CD4-positive, alpha-beta memory T cell (primary cell): ENCODE measurements at regions of chr22 and their contacts with region 1.

Region 1: DNA sequence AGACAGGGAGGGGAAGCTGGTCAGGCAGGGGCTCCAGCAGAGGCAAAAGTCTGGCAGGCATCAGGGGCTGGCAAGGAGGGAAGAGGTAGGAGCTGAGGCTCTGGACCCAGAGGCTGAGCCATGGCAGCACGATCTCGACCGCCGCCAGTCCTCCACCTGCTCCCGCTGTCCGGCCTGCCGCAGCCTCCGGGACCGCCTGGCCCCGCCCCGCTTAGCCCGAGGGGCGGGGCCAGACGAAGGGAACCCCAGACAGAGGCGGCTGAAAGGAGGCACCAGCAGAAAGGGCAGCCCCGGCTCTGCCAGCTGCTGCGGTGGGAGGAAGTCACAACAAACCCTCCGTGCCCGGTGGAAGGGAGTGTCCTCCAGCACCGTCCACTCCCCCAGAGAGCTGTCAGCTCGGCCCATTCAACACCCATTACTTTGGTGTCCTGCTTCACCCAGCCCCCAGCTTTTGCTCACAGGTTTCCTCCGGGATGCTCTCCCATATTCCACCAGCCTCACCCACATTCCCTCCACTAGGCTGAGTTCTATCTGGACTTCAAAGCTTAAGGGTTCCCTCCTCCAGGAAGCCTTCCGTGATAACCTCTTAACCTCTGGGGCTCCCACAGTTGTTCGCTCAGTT is at the start of gene MFNG:
- DNase-seq: peak; percentile 61 to 84 (median 64)
- H3K4me3 ChIP-seq: peak within 1 kb of the TSS; percentile 85 to 87
- H3K4me3 Mint-ChIP-seq: peak within 1 kb of the TSS; percentile 89 to 98 (median 96)
- H3K27ac ChIP-seq: peak within 1 kb of the TSS; percentile 85
- H3K27ac Mint-ChIP-seq: peak within 1 kb of the TSS; percentile 94 to 98 (median 97)
- H3K4me1 ChIP-seq: peaks cover 63% of the 10 kb centered on the region
- H3K4me1 Mint-ChIP-seq: peaks cover 39 to 87% (median 57%) of the 10 kb centered on the region in 4 donors
- H3K27me3 ChIP-seq: no peaks in the 10 kb centered on the region
- H3K27me3 Mint-ChIP-seq: no peaks in the 10 kb centered on the region
- total RNA-seq, gene MFNG: 213 to 218 TPM

Region 2: DNA sequence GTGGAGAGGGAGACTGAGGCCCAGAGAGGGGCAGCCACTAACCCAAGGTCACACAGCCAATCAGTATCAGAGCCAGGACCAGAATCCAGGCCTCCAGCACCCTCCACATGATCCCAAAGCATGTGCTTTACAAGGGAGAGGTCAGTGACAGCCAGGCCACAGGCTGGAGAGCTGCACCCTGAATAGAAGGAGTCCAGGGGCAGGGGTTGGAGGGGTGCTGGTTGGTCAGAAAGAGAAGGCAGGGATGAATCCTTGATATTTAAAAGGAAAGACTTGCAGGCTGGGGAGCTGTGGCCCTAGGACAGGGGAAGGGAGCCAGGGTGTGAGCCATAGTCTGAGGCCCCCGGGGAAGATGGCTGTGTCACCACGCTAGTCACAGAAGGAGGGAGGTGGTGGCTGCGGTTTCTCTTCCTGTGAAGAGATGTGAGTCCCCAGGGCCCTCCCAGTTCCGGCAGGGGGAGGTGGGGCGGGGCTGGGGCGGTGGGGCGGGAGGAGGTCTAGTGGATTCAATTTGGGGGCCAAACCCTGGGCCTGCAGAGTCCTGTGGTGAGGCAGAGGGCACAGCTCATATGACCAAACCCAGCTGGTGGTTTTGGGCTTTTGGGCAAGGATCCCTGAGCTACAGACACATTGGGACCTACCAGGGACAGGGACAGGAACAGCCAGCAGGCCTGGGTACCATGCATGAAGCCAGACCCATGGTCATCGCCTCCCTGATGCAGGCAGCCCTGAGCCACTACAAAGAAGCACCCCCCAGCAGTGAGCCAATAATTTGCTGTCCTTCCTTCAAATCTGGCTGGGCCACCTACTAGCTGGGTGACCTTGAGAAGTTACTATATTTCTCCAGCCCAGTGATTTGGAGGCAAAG is 256.3 kb before region 1 on chr22:
- CTCF ChIA-PET with region 1: no interaction called
- POLR2A ChIA-PET with region 1: interaction called, 14 read pairs
- intact Hi-C with region 1: no loop called
- DNase-seq: peak; percentile 87 to 97 (median 88)
- H3K4me3 ChIP-seq: peak overlapping the region; percentile 48 to 51
- H3K4me3 Mint-ChIP-seq: peak overlapping the region; percentile 75 to 88 (median 82)
- H3K27ac ChIP-seq: peak overlapping the region; percentile 97
- H3K27ac Mint-ChIP-seq: peak overlapping the region; percentile 87 to 100 (median 100)
- H3K4me1 ChIP-seq: peaks cover 96% of the 10 kb centered on the region
- H3K4me1 Mint-ChIP-seq: peaks cover 67 to 92% (median 83%) of the 10 kb centered on the region in 4 donors
- H3K27me3 ChIP-seq: no peaks in the 10 kb centered on the region
- H3K27me3 Mint-ChIP-seq: no peaks in the 10 kb centered on the region

Region 3: DNA sequence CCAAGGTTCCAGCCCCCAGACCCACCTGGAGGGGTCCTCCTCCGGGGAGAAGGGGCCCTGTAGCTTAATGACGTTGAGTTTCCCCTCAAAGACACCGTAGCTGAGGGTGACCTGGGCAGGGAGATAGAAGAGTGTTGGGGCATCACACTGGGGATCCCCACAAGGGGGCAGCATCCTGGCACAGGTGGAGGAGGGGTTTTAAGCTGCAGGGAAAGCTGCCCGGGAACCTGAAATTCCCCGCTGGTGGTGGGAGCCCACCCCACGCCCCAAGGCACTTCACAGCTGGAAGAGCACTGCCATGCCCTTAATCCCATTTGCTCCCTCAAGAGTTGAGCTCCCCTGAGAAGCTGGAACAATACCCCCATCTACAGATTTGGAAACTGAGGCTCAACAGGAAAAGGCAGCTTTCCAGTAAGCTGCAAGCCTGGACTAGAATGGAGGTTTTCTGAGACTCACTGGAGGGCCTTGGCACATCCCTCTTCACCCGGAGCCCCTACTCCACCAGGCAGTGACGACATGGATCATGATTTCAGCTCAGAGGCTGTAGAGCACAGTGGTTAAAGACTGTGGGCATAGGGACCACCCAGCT is 13.8 kb before region 1 on chr22:
- CTCF ChIA-PET with region 1: interaction called, 185 read pairs
- POLR2A ChIA-PET with region 1: interaction called, 53 read pairs
- intact Hi-C with region 1: no loop called
- DNase-seq: peak; percentile 29 to 55 (median 39)
- H3K4me3 ChIP-seq: no peak overlapping the region
- H3K4me3 Mint-ChIP-seq: no peak overlapping the region
- H3K27ac ChIP-seq: no peak overlapping the region
- H3K27ac Mint-ChIP-seq: peak overlapping the region in 3 of 7 donors; percentile 37 to 64 (median 61)
- H3K4me1 ChIP-seq: no peaks in the 10 kb centered on the region
- H3K4me1 Mint-ChIP-seq: peaks cover 0 to 12% (median 7%) of the 10 kb centered on the region in 4 donors
- H3K27me3 ChIP-seq: no peaks in the 10 kb centered on the region
- H3K27me3 Mint-ChIP-seq: no peaks in the 10 kb centered on the region

Region 4: GRCh38 chr22:37538590-37539357 is 52.4 kb after region 1 on chr22:
- CTCF ChIA-PET with region 1: no interaction called
- POLR2A ChIA-PET with region 1: no interaction called
- intact Hi-C with region 1: loop called (anchors 2 kb)
- DNase-seq: peak; percentile 85 to 86 (median 86)
- H3K4me3 ChIP-seq: no peak overlapping the region
- H3K4me3 Mint-ChIP-seq: peak overlapping the region in 7 of 8 donors; percentile 14 to 88 (median 47)
- H3K27ac ChIP-seq: no peak overlapping the region
- H3K27ac Mint-ChIP-seq: peak overlapping the region in 5 of 7 donors; percentile 1 to 71 (median 38)
- H3K4me1 ChIP-seq: peaks cover 30% of the 10 kb centered on the region
- H3K4me1 Mint-ChIP-seq: peaks cover 14 to 40% (median 25%) of the 10 kb centered on the region in 4 donors
- H3K27me3 ChIP-seq: no peaks in the 10 kb centered on the region
- H3K27me3 Mint-ChIP-seq: peaks cover 14 to 18% of the 10 kb centered on the region in 2 donors